ENCODE measurements at regions of chr2 and their contacts with region 1.

Region 1: DNA sequence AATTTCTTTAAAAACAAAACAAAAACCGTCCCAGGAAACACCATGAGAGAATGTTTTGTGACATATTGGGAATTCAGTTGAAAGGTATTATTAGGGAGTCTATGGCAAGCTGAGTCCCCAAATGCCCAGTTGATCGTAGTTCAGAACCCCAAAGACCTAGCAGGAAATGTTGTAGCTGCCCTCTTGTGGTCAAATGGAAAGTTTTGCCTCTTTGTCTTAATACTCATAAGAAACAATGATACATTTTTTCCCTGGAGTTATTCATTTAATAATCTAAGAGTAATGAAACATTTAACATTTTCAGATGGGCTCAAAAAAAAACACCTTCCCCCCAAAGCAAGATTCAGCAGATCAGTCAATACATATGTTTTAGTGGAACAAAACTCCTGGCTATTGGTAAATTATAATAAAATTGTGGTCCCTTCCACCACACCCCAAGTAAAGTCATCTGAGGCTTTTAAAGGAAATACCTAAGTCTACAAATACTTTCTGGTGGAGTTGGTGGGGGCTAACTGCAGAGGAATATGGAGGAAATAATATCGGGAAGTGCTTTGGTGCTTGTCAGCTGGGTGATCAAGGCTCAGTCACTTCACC is 37.8 kb upstream of the EFEMP1 start:
- DNase-seq: peak; percentile 43 to 76
- ATAC-seq: peak; percentile 74 to 75; a peak in 5 of 6 replicates
- H3K4me3 ChIP-seq: no peak overlapping the region
- H3K27ac ChIP-seq: peak overlapping the region; percentile 43 to 67; a peak in 5 of 6 replicates
- H3K4me1 ChIP-seq: peaks cover 29% of the 10 kb centered on the region
- CTCF ChIP-seq: peak; percentile 97
- EP300 ChIP-seq: no peak
- POLR2A ChIP-seq: no peak
- RAD21 ChIP-seq: peak; percentile 93 to 95

Region 2: GRCh38 chr2:55796121-55796520 is 165.3 kb before region 1 on chr2:
- CTCF ChIA-PET with region 1: no interaction called
- POLR2A ChIA-PET with region 1: no interaction called
- DNase-seq: no peak
- ATAC-seq: no peak
- H3K4me3 ChIP-seq: no peak overlapping the region
- H3K27ac ChIP-seq: no peak overlapping the region
- H3K4me1 ChIP-seq: peaks cover 8% of the 10 kb centered on the region
- CTCF ChIP-seq: no peak
- EP300 ChIP-seq: no peak
- POLR2A ChIP-seq: no peak
- RAD21 ChIP-seq: no peak

Region 3: DNA sequence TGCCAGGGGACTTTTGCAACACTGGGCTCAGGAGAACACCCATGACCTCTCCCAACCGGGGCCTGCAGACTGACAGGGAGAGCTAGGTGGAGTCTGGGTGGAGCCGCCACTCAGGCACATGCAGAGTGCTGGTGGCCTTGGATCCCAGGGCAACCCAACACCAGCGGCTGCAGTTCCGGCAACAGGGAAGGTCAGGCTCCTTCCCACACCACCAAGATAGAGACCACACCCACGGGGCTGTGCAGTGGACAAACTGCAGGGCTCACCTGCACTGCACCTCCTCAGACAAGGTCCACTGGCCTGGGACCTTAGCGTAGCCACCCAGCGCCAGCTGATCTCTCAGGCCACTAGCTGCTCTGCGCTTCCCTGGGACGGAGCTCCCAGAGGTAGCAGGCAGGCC is 136.8 kb before region 1 on chr2:
- CTCF ChIA-PET with region 1: interaction called, 11 read pairs
- POLR2A ChIA-PET with region 1: no interaction called
- DNase-seq: no peak
- ATAC-seq: peak; percentile 42 to 49; a peak in 3 of 6 replicates
- H3K4me3 ChIP-seq: no peak overlapping the region
- H3K27ac ChIP-seq: peak overlapping the region in 1 of 2 experiments; percentile 29; a peak in 2 of 6 replicates
- H3K4me1 ChIP-seq: peaks cover 20% of the 10 kb centered on the region
- CTCF ChIP-seq: no peak
- EP300 ChIP-seq: no peak
- POLR2A ChIP-seq: no peak
- RAD21 ChIP-seq: no peak

Region 4: DNA sequence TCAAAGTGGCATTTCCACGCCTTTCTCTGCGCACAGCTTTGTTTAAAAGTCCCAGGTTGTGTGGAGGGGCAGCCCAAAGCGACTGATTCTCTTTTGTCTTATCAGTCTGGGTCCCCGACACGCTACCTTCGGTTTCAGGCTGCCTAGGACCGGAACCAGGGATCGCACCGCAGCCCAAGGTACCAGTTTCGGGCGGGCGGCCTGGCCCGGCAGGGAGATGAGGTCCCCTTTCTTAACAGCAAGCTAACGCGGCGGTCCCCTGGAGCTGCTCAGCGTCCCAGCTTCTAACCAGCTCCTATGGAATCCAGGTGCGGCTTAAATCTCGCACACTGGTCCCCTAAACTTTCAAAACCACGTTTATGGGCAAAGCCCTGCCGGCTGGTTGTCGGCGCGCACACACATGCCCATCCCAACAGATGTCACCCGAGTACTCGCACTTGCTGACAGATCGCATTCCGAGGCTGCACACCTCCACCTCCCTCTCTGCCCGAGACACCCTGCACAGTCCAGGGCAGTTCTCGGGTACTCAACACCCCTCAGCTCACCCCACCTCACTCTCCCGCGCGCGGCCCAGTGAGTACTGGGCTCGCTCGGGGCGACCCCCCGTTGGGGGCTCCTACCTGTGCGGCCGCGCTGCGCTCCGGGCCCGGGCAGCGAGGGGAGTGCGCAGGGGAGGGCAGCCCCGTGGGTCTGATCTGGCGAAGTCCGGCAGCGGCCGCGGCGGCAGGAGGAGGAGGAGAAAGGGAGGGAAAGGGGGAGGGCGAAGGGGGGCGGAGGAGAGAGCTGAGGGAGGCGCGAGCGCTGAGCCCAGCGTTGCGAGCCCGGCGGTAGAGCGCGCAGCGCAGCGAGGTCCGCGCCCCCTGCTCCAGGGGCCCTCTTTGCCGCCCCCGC is 38.1 kb before region 1 on chr2 and contains the start of gene EFEMP1:
- CTCF ChIA-PET with region 1: interaction called, 16 read pairs
- POLR2A ChIA-PET with region 1: interaction called, 3 read pairs
- DNase-seq: peak; percentile 41 to 57
- ATAC-seq: peak; percentile 92 to 96
- H3K4me3 ChIP-seq: peak within 1 kb of the TSS; percentile 78
- H3K27ac ChIP-seq: peak within 1 kb of the TSS; percentile 70 to 85
- H3K4me1 ChIP-seq: 0 out of 3 replicates have a peak, but pooled peaks cover 6% of the 10 kb centered on the region
- CTCF ChIP-seq: no peak; the same call in 2 of the 3 replicates
- EP300 ChIP-seq: no peak
- POLR2A ChIP-seq: peak; percentile 20; the same call in 1 of the 2 replicates
- RAD21 ChIP-seq: peak; percentile 33 to 51; a peak in 3 of 5 replicates
- polyA plus RNA-seq, gene EFEMP1: 54.6 and 59.2 TPM in 2 replicates

Region 5: GRCh38 chr2:55976681-55977080 is 15.3 kb after region 1 on chr2:
- CTCF ChIA-PET with region 1: interaction called, 10 read pairs
- POLR2A ChIA-PET with region 1: no interaction called
- DNase-seq: no peak
- ATAC-seq: no peak
- H3K4me3 ChIP-seq: no peak overlapping the region
- H3K27ac ChIP-seq: no peak overlapping the region
- H3K4me1 ChIP-seq: no peaks in the 10 kb centered on the region
- CTCF ChIP-seq: no peak
- EP300 ChIP-seq: no peak
- POLR2A ChIP-seq: no peak
- RAD21 ChIP-seq: no peak

Region 6: DNA sequence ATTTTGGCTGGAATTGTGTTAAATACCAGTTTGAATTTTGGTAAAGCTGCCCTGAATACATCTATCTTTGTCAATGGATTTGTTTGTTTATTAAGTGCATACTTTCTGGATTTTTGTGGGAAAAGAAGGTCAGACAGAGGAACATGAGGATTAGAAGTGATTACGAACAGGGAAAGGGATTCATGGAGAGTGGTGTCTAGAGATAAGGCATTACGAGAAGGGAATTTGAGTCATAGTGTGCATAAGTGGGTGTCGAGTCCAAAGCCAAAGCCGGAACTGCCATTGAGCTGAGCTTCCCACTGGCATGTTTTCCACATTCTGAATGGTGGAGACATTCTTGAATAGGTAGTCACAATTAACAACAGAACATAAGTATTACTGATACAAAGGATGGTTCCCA is 31.1 kb after region 1 on chr2:
- CTCF ChIA-PET with region 1: interaction called, 13 read pairs
- POLR2A ChIA-PET with region 1: no interaction called
- DNase-seq: peak; percentile 30 to 88
- ATAC-seq: peak; percentile 86 to 97
- H3K4me3 ChIP-seq: no peak overlapping the region
- H3K27ac ChIP-seq: peak overlapping the region; percentile 57 to 75
- H3K4me1 ChIP-seq: peaks cover 40% of the 10 kb centered on the region
- CTCF ChIP-seq: no peak
- EP300 ChIP-seq: peak; percentile 72 to 92; a peak in 4 of 5 replicates
- POLR2A ChIP-seq: no peak
- RAD21 ChIP-seq: peak; percentile 2 to 26; a peak in 1 of 5 replicates

Region 7: GRCh38 chr2:56239437-56239836 is 278.0 kb after region 1 on chr2:
- CTCF ChIA-PET with region 1: no interaction called
- POLR2A ChIA-PET with region 1: no interaction called
- DNase-seq: no peak
- ATAC-seq: peak in 1 of 2 experiments; percentile 54; a peak in 1 of 6 replicates
- H3K4me3 ChIP-seq: no peak overlapping the region
- H3K27ac ChIP-seq: no peak overlapping the region
- H3K4me1 ChIP-seq: no peaks in the 10 kb centered on the region
- CTCF ChIP-seq: no peak
- EP300 ChIP-seq: no peak
- POLR2A ChIP-seq: no peak
- RAD21 ChIP-seq: no peak

Measured in A549 (cell line).